ENCODE measurements at regions of chr9 and their contacts with region 1.

Region 1: GRCh38 chr9:28045051-28045450 is 471.8 kb upstream of the C9orf72 start:
- DNase-seq: no peak
- H3K4me3 ChIP-seq: no peak overlapping the region
- H3K27ac ChIP-seq: no peak overlapping the region
- H3K4me1 ChIP-seq: no peaks in the 10 kb centered on the region
- H3K27me3 ChIP-seq: no peaks in the 10 kb centered on the region
- CTCF ChIP-seq: no peak
- EP300 ChIP-seq: no peak
- POLR2A ChIP-seq: no peak

Region 2: DNA sequence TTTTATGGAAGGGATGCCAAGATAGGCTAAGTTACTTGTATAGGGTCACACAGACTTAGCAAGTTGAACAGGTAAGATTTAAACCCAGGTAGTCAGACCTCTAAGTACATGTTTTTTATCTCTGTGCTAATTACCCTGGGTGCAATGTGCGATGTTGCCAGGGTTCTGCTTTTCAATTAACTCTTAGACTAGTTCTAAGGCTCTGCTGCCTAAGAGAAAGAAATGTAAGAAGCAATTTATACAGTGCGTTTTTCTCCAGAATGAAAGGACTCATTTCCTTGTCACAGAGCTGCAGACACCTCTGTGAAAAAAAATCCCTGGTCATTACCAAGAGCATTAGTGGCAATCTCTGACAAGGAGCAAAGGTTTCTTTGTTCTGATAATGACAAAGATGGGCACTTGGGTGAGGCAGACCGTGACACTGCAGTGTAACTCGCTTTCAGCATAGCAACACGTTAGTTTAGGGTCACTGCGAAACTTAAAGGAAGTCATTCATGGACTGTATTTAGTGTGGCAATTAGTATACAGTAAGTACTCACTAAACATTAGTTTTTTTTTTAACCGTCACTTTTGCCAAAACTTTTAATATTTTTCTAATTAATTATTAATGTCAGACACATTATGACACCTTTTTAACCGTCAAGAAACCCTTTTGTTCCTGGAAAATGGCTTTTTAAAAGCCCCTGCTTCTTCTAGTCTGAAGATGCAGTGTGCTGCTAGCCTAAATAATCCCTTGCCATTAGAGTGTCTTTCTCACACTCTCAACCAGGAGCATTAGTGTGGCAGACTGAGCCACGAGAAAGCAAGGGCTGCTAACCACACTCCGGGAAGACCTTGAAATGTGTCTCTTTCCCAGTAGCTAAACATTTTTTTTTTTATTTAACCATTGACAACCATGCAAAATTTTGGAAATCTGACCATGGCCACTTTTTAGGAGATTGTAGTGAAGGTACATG is 48.2 kb after region 1 on chr9:
- intact Hi-C with region 1: no loop called
- DNase-seq: no peak
- H3K4me3 ChIP-seq: no peak overlapping the region
- H3K27ac ChIP-seq: no peak overlapping the region
- H3K4me1 ChIP-seq: no peaks in the 10 kb centered on the region
- H3K27me3 ChIP-seq: no peaks in the 10 kb centered on the region
- CTCF ChIP-seq: no peak
- EP300 ChIP-seq: no peak
- POLR2A ChIP-seq: no peak

Region 3: DNA sequence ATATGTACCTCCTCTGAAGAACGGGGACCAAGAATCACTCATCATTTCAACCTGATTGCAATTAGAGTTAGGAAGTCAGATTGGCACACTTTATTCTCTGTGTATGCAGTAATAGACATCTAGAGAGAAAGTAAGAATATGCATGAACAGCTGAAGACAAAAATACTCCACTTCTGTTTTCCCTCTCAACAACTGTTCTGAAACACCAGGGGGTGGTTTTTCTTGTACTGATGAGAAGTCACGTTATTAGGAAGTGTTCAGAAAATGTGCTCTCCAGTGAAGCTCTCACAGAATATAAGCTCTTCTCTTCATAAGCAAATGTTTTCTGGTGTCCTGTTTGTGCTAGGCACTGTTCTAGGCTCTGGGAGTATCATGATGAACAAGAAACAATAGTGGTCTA is 60.0 kb after region 1 on chr9:
- intact Hi-C with region 1: loop called in 1 of 4 experiments (anchors 10 kb)
- DNase-seq: no peak
- H3K4me3 ChIP-seq: no peak overlapping the region
- H3K27ac ChIP-seq: no peak overlapping the region
- H3K4me1 ChIP-seq: no peaks in the 10 kb centered on the region
- H3K27me3 ChIP-seq: no peaks in the 10 kb centered on the region
- CTCF ChIP-seq: no peak
- EP300 ChIP-seq: no peak
- POLR2A ChIP-seq: no peak